WTC11 (cell line): ENCODE measurements at regions of chr9 and their contacts with region 1.

Region 1: GRCh38 chr9:136410500-136411287 is at the starts of genes ENTR1 and PMPCA:
- DNase-seq: peak; percentile 92
- ATAC-seq: peak; percentile 74
- H3K4me3 Mint-ChIP-seq: peak within 1 kb of the TSS; percentile 92
- H3K27ac Mint-ChIP-seq: peak within 1 kb of the TSS; percentile 90
- H3K4me1 Mint-ChIP-seq: peaks cover 27% of the 10 kb centered on the region
- H3K27me3 Mint-ChIP-seq: no peaks in the 10 kb centered on the region
- CTCF ChIP-seq: no peak
- total RNA-seq, gene ENTR1: 102 to 140 TPM (median 103 TPM) in 3 replicates
- total RNA-seq, gene PMPCA: 77.0 to 103 TPM (median 79.2 TPM) in 3 replicates

Region 2: GRCh38 chr9:136275655-136276429 is 134.9 kb before region 1 on chr9:
- CTCF ChIA-PET with region 1: no interaction called
- POLR2A ChIA-PET with region 1: no interaction called
- DNase-seq: no peak
- ATAC-seq: peak; percentile 39; the same call in 1 of the 2 replicates
- H3K4me3 Mint-ChIP-seq: no peak overlapping the region
- H3K27ac Mint-ChIP-seq: no peak overlapping the region
- H3K4me1 Mint-ChIP-seq: no peaks in the 10 kb centered on the region
- H3K27me3 Mint-ChIP-seq: no peaks in the 10 kb centered on the region
- CTCF ChIP-seq: no peak

Region 3: GRCh38 chr9:136400038-136400834 is 10.5 kb before region 1 on chr9 and contains the start of gene SNAPC4:
- CTCF ChIA-PET with region 1: interaction called, 11 read pairs
- POLR2A ChIA-PET with region 1: interaction called, 3 read pairs
- DNase-seq: peak; percentile 91
- ATAC-seq: peak; percentile 89
- H3K4me3 Mint-ChIP-seq: peak within 1 kb of the TSS; percentile 88
- H3K27ac Mint-ChIP-seq: peak within 1 kb of the TSS; percentile 90
- H3K4me1 Mint-ChIP-seq: peaks cover 9% of the 10 kb centered on the region
- H3K27me3 Mint-ChIP-seq: no peaks in the 10 kb centered on the region
- CTCF ChIP-seq: peak; percentile 57; the same call in 1 of the 2 replicates
- total RNA-seq, gene SNAPC4: 18.9 to 22.8 TPM (median 20.0 TPM) in 3 replicates